ENCODE measurements at regions of chr2 and their contacts with region 1.

Region 1: GRCh38 chr2:200578778-200579177 is 7.0 kb upstream of the AOX1 start:
- DNase-seq: no peak
- H3K4me3 ChIP-seq: no peak overlapping the region
- H3K27ac ChIP-seq: no peak overlapping the region
- H3K4me1 ChIP-seq: no peaks in the 10 kb centered on the region
- H3K27me3 ChIP-seq: no peaks in the 10 kb centered on the region
- CTCF ChIP-seq: peak in 2 of 3 experiments; percentile 56 to 62; a peak in 3 of 4 replicates
- EP300 ChIP-seq: no peak
- POLR2A ChIP-seq: no peak
- RAD21 ChIP-seq: peak; percentile 49 to 62; a peak in 3 of 4 replicates

Region 2: GRCh38 chr2:200567932-200568331 is 10.8 kb before region 1 on chr2:
- CTCF ChIA-PET with region 1: interaction called, 14 read pairs
- POLR2A ChIA-PET with region 1: no interaction called
- DNase-seq: no peak
- H3K4me3 ChIP-seq: no peak overlapping the region
- H3K27ac ChIP-seq: no peak overlapping the region
- H3K4me1 ChIP-seq: no peaks in the 10 kb centered on the region
- H3K27me3 ChIP-seq: no peaks in the 10 kb centered on the region
- CTCF ChIP-seq: no peak
- EP300 ChIP-seq: no peak
- POLR2A ChIP-seq: no peak
- RAD21 ChIP-seq: no peak

Region 3: DNA sequence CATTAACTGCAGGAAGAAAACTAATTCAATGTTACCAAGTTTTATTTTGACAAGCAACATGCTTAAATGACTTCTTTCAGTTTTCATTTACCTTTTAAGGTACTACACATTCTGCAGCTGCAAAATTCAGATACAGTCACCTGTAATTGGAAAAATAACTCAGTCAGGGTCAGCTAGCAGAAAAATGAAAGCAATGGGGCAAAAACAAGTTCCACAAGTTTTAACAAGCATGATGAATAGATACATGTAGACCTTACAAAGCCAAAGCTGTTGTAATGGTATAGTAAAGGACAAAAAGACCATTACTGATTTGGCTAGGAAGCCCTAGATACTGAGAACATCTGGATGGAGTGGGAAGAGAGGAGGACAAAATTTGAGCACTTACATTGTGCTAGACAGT is 380.5 kb after region 1 on chr2:
- CTCF ChIA-PET with region 1: no interaction called
- POLR2A ChIA-PET with region 1: no interaction called
- DNase-seq: no peak
- H3K4me3 ChIP-seq: no peak overlapping the region
- H3K27ac ChIP-seq: no peak overlapping the region
- H3K4me1 ChIP-seq: peaks cover 0 to 3% (median under 1%) of the 10 kb centered on the region in 4 experiments; a peak in 3 of 7 replicates
- H3K27me3 ChIP-seq: no peaks in the 10 kb centered on the region
- CTCF ChIP-seq: no peak
- EP300 ChIP-seq: no peak
- POLR2A ChIP-seq: no peak
- RAD21 ChIP-seq: no peak